Natural killer cell (primary cell): ENCODE measurements at regions of chr22 and their contacts with region 1.

Region 1: GRCh38 chr22:36781656-36782627 is 6.0 kb upstream of the IFT27 start:
- DNase-seq: peak; percentile 81 to 88
- ATAC-seq: peak; percentile 94 to 98 (median 98)
- H3K4me3 ChIP-seq: no peak overlapping the region
- H3K4me3 Mint-ChIP-seq: no peak overlapping the region
- H3K27ac ChIP-seq: no peak overlapping the region
- H3K27ac Mint-ChIP-seq: peak overlapping the region in 1 of 2 donors; percentile 65
- H3K4me1 ChIP-seq: peaks cover 11% of the 10 kb centered on the region
- H3K4me1 Mint-ChIP-seq: peaks cover 7 to 15% of the 10 kb centered on the region in 2 donors
- H3K27me3 ChIP-seq: no peaks in the 10 kb centered on the region
- H3K27me3 Mint-ChIP-seq: peaks cover 11 to 22% of the 10 kb centered on the region in 2 donors
- CTCF ChIP-seq: peak; percentile 93

Region 2: GRCh38 chr22:36856121-36856791 is 74.3 kb after region 1 on chr22:
- intact Hi-C with region 1: loop called (anchors 1 kb)
- DNase-seq: peak; percentile 96 to 97
- ATAC-seq: peak; percentile 84 to 93 (median 88)
- H3K4me3 ChIP-seq: no peak overlapping the region
- H3K4me3 Mint-ChIP-seq: peak overlapping the region; percentile 40
- H3K27ac ChIP-seq: no peak overlapping the region
- H3K27ac Mint-ChIP-seq: peak overlapping the region; percentile 14 to 38
- H3K4me1 ChIP-seq: peaks cover 33% of the 10 kb centered on the region
- H3K4me1 Mint-ChIP-seq: peaks cover 20 to 25% of the 10 kb centered on the region in 2 donors
- H3K27me3 ChIP-seq: no peaks in the 10 kb centered on the region
- H3K27me3 Mint-ChIP-seq: peaks cover 3 to 7% of the 10 kb centered on the region in 2 donors
- CTCF ChIP-seq: peak; percentile 100